SK-N-SH (cell line): ENCODE measurements at regions of chr12 and their contacts with region 1.

Region 1: DNA sequence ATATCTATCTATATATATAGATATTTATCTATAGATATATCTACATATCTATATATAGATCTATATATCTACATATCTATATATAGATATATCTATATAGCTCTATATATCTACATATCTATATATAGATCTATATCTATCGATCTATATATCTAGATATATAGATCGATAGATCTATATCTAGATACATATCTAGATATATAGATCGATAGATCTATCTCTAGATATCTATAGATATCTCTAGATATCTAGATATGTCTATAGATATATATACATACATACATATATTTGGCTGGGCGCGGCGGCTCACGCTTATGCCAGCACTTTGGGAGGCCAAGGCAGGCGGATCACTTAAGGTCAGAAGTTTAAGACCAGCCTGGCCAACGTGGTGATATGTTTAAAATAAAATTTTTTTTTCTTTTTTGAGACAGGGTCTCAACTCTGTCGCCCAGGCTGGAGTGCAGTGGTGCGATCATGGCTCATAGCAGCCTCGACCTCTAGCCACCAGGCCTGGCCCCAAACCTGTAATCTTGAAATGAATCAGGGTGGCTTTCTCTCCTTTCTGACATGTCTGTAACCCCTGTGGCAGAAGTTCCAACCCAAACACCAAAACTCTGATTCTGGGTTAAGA is 18.1 kb downstream of the ARPC3 start:
- DNase-seq: no peak
- H3K4me3 ChIP-seq: peak overlapping the region in 1 of 2 experiments; percentile 40; a peak in 2 of 4 replicates
- H3K27ac ChIP-seq: no peak overlapping the region
- H3K4me1 ChIP-seq: 0 out of 4 replicates have a peak, but pooled peaks cover 0 to 1% of the 10 kb centered on the region in 2 experiments
- H3K27me3 ChIP-seq: no peaks in the 10 kb centered on the region
- CTCF ChIP-seq: no peak
- EP300 ChIP-seq: no peak
- RAD21 ChIP-seq: no peak

Region 2: GRCh38 chr12:110100315-110100970 is 331.6 kb before region 1 on chr12:
- CTCF ChIA-PET with region 1: interaction called, 35 read pairs
- POLR2A ChIA-PET with region 1: interaction called, 4 read pairs
- DNase-seq: peak; percentile 65
- H3K4me3 ChIP-seq: no peak overlapping the region; a peak in 1 of 4 replicates
- H3K27ac ChIP-seq: no peak overlapping the region
- H3K4me1 ChIP-seq: no peaks in the 10 kb centered on the region
- H3K27me3 ChIP-seq: no peaks in the 10 kb centered on the region
- CTCF ChIP-seq: peak; percentile 96
- EP300 ChIP-seq: no peak
- RAD21 ChIP-seq: peak; percentile 96

Region 3: DNA sequence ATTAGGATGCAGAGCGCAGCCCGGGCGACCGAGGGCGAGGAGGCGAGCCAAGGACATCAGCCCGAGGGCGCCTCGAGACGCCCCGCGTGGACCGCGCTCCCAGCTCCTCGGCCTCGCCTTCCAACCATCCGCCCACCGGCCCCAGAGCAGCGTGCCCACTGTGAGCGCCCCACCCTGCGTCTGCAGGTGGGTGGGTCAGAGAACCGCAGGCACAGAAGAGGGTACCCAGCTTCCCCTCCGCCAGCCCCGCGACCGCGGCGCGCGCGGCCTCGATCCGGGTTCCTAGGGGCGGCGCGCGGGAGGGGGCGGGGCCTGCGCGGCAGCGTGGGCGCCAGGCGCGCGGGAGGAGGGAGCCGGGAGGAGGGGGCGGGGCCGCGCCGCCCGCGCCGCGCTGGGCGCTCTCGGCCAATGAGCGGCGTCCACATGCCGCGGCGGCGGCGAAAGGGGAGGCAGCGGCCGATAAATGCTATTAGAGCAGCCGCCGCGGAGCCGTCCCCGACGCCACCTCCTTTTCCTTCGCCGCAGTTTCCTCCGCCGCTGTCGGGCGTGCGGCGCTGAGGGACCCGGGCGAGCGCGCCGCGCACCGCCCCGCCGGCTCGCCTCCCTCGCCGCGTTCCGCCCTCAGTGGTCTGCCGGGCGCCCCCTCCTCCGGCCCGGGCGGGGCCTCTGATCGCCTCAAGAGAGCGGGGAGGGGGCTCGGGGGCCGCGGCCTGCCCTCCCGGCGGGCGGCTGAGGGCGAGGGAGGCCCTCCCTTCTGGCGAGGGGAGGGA is 151.1 kb before region 1 on chr12 and contains the start of gene ATP2A2:
- CTCF ChIA-PET with region 1: interaction called, 16 read pairs
- POLR2A ChIA-PET with region 1: interaction called, 3 read pairs
- DNase-seq: peak; percentile 98
- H3K4me3 ChIP-seq: peak within 1 kb of the TSS; percentile 81 to 92
- H3K27ac ChIP-seq: peak within 1 kb of the TSS; percentile 91 to 96
- H3K4me1 ChIP-seq: peaks cover 23 to 31% of the 10 kb centered on the region in 2 experiments
- H3K27me3 ChIP-seq: no peaks in the 10 kb centered on the region
- CTCF ChIP-seq: no peak
- EP300 ChIP-seq: no peak
- RAD21 ChIP-seq: no peak
- polyA plus RNA-seq, gene ATP2A2: 83.9 and 120 TPM in 2 replicates

Region 4: GRCh38 chr12:110357548-110357947 is 74.5 kb before region 1 on chr12:
- CTCF ChIA-PET with region 1: interaction called, 15 read pairs
- POLR2A ChIA-PET with region 1: no interaction called
- DNase-seq: no peak
- H3K4me3 ChIP-seq: no peak overlapping the region
- H3K27ac ChIP-seq: no peak overlapping the region
- H3K4me1 ChIP-seq: no peaks in the 10 kb centered on the region
- H3K27me3 ChIP-seq: no peaks in the 10 kb centered on the region
- CTCF ChIP-seq: no peak
- EP300 ChIP-seq: no peak
- RAD21 ChIP-seq: no peak

Region 5: GRCh38 chr12:110421159-110421661 is 10.9 kb before region 1 on chr12:
- CTCF ChIA-PET with region 1: interaction called, 27 read pairs
- POLR2A ChIA-PET with region 1: interaction called, 3 read pairs
- DNase-seq: no peak
- H3K4me3 ChIP-seq: no peak overlapping the region
- H3K27ac ChIP-seq: no peak overlapping the region
- H3K4me1 ChIP-seq: no peaks in the 10 kb centered on the region; a peak in 1 of 4 replicates
- H3K27me3 ChIP-seq: no peaks in the 10 kb centered on the region
- CTCF ChIP-seq: no peak
- EP300 ChIP-seq: no peak
- RAD21 ChIP-seq: no peak

Region 6: DNA sequence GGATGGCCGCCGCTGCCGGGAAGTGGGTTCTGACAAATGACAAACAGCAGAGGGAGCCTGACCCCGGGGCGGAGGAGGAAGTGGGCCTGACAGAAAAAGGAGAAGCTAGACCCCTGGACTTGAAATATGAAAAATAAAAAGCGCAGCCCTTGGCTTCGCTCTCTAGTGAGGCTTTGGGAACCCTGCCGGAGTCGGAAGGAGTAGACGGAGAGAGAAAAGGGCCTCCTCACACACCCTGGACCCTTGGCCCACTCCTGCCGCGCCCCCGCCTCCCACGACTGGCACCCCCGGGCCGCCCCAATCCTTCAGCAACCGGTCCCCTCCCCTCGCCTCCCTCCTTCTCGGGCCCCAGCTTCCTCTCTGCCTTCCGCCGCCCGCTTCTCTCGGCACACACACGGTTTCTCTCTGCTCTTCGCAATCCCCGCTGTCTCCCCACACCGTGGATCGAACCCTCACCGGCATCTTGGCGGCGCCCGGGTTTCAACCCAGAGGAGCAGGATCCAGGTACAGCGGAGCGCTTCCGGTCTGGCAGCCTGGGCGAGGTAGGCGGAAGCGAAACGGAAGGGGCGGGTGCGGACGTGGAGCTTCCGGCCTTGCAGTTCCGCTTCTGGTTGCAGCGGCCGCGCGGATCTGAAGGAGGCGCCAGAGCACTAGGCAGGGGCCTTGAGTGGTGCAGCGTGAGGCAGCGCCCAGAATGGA is 17.9 kb after region 1 on chr12 and contains the start of gene ARPC3:
- CTCF ChIA-PET with region 1: interaction called, 12 read pairs
- POLR2A ChIA-PET with region 1: interaction called, 6 read pairs
- DNase-seq: peak; percentile 93
- H3K4me3 ChIP-seq: peak within 1 kb of the TSS; percentile 71 to 87
- H3K27ac ChIP-seq: peak within 1 kb of the TSS; percentile 90 to 93
- H3K4me1 ChIP-seq: no peaks in the 10 kb centered on the region; a peak in 1 of 4 replicates
- H3K27me3 ChIP-seq: no peaks in the 10 kb centered on the region
- CTCF ChIP-seq: peak; percentile 85
- EP300 ChIP-seq: no peak
- RAD21 ChIP-seq: peak; percentile 85
- polyA plus RNA-seq, gene ARPC3: 50.5 and 74.7 TPM in 2 replicates

Region 7: GRCh38 chr12:110531741-110532333 is 99.8 kb after region 1 on chr12:
- CTCF ChIA-PET with region 1: no interaction called
- POLR2A ChIA-PET with region 1: no interaction called
- DNase-seq: no peak
- H3K4me3 ChIP-seq: no peak overlapping the region
- H3K27ac ChIP-seq: no peak overlapping the region; a peak in 1 of 4 replicates
- H3K4me1 ChIP-seq: peaks cover 0 to 10% of the 10 kb centered on the region in 2 experiments
- H3K27me3 ChIP-seq: no peaks in the 10 kb centered on the region
- CTCF ChIP-seq: no peak
- EP300 ChIP-seq: no peak
- RAD21 ChIP-seq: no peak